ENCODE measurements at regions of chr4 and their contacts with region 1.

Region 1: GRCh38 chr4:81565142-81565870 is 93.6 kb upstream of the RASGEF1B start:
- DNase-seq: peak; percentile 34 to 64 (median 40)
- H3K4me3 ChIP-seq: no peak overlapping the region
- H3K4me3 Mint-ChIP-seq: peak overlapping the region; percentile 1 to 47
- H3K27ac ChIP-seq: peak overlapping the region in 1 of 2 donors; percentile 47
- H3K27ac Mint-ChIP-seq: peak overlapping the region in 6 of 7 donors; percentile 73 to 93 (median 86)
- H3K4me1 ChIP-seq: peaks cover 27 to 37% of the 10 kb centered on the region in 2 donors
- H3K4me1 Mint-ChIP-seq: peaks cover 38% of the 10 kb centered on the region
- H3K27me3 ChIP-seq: no peaks in the 10 kb centered on the region
- H3K27me3 Mint-ChIP-seq: peaks cover 0 to 3% (median 0%) of the 10 kb centered on the region in 3 donors
- CTCF ChIP-seq: no peak

Region 2: GRCh38 chr4:81606801-81607501 is 41.6 kb after region 1 on chr4:
- intact Hi-C with region 1: loop called in 1 of 2 experiments (anchors 10 kb)
- DNase-seq: peak; percentile 59 to 80 (median 79)
- H3K4me3 ChIP-seq: no peak overlapping the region
- H3K4me3 Mint-ChIP-seq: peak overlapping the region in 1 of 2 donors; percentile 31
- H3K27ac ChIP-seq: peak overlapping the region; percentile 41 to 65
- H3K27ac Mint-ChIP-seq: peak overlapping the region; percentile 4 to 92 (median 68)
- H3K4me1 ChIP-seq: peaks cover 26 to 28% of the 10 kb centered on the region in 2 donors
- H3K4me1 Mint-ChIP-seq: peaks cover 29% of the 10 kb centered on the region
- H3K27me3 ChIP-seq: no peaks in the 10 kb centered on the region
- H3K27me3 Mint-ChIP-seq: peaks cover 0 to 2% (median 0%) of the 10 kb centered on the region in 3 donors
- CTCF ChIP-seq: no peak

Measured in CD14-positive monocyte (primary cell).